Astrocyte of the cerebellum (primary cell): ENCODE measurements at regions of chrX and their contacts with region 1.

Region 1: GRCh38 chrX:138191998-138192397 is 519.5 kb downstream of the FGF13 start:
- DNase-seq: peak; percentile 6
- H3K4me3 ChIP-seq: no peak overlapping the region
- CTCF ChIP-seq: peak; percentile 63

Region 2: DNA sequence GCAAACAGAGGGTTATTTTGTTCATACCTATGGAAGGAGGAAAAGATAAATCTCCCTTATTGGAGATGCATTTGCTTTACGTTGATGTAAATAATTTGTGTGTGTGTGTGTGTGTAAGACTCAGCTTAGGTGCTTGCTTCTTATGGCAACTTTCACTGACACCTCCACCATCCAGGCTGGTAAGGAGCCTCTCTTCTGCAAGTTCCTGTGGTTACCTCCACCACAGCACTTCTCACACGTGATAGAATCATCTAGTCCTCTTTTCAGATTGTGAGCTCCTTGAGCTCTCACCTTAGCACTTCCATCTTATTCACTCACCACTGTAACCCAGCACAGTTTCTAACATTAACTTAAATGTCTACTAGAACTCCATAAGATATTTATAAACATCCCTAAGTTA is 34.1 kb before region 1 on chrX:
- in situ Hi-C with region 1: no loop called
- DNase-seq: no peak
- H3K4me3 ChIP-seq: no peak overlapping the region
- CTCF ChIP-seq: no peak

Region 3: DNA sequence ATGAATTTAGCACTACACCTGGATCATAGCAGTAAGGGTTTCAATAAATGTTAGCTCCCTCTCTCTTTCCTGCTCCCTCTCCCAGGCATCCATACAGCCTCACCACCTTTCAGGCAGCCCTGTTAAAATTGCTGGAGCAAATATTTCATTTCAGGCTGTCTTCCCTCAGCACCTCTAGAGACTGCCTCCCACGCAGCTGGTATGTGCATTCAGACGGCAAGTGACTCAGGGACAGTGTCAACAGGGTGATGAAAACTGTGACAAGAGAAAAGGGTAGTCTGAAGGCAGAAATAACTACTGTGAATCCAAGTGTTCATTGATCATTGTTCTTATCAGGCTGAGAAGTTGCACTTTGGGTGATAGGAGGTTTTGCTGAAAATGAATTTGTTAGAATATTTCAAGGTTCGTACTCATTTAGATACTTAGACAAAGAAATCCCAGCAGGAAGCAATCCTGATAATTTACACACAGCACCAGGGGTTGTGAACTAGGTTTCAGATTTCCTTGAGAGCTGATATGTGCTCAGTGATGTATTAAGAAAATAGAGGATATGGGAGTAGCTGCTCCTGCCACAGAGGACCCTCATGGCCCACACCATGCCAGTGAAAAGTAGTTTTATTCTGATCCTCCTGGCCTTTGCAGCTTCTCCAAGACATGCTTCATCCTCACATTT is 95.3 kb after region 1 on chrX:
- in situ Hi-C with region 1: loop called (anchors 5 kb)
- DNase-seq: no peak
- H3K4me3 ChIP-seq: no peak overlapping the region
- CTCF ChIP-seq: no peak

Region 4: GRCh38 chrX:138692591-138692990 is 500.6 kb after region 1 on chrX:
- in situ Hi-C with region 1: no loop called
- DNase-seq: no peak
- H3K4me3 ChIP-seq: no peak overlapping the region
- CTCF ChIP-seq: no peak